ENCODE measurements at regions of chr9 and their contacts with region 1.

Region 1: DNA sequence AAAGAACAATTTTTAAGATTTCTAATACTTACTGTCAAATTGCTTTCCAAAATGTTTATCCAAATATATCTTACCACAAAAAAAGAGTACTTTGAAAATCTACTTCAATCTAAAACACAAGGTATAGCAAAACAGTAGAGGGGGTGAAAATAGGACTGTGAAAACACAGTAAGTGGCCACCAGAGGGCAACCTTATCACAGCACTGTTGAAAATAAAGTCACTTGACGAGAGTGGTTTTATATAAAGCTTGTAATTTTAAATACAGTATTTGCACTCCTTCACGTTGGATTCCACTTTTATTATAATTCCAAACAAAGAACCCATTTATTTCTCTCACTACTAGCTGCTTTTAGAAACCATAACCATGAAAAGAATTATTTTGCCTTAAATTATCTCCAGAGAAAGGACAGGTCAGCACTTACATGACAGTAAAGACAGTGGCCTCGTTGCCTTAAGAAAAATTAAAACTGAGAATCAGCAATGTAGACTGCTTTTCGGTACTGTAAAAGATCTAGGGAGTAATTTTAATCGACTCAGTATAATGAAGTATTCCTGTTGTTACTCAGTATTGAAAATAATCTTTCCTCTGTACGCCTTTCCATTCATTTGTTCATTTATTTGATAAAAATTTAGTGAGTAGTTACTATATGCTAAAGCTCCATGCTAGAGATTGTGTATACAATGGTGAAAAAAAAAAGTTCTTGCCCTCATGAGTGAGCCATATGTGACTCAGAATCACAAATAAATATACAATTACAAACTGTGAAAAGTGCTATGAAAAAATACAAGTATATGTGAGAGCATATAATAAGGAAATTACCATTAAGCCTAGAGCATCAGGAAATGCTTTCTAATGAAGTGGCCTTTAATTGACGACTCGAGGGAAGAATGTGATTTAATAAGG is 40.0 kb upstream of the CDK5RAP2 start:
- DNase-seq: peak; percentile 71
- H3K4me3 Mint-ChIP-seq: no peak overlapping the region
- H3K27ac Mint-ChIP-seq: peak overlapping the region; percentile 7
- H3K4me1 Mint-ChIP-seq: peaks cover 25% of the 10 kb centered on the region
- H3K27me3 Mint-ChIP-seq: no peaks in the 10 kb centered on the region
- CTCF ChIP-seq: peak; percentile 72

Region 2: GRCh38 chr9:120441408-120442307 is 178.3 kb before region 1 on chr9:
- CTCF ChIA-PET with region 1: no interaction called
- POLR2A ChIA-PET with region 1: no interaction called
- intact Hi-C with region 1: no loop called
- DNase-seq: no peak
- H3K4me3 Mint-ChIP-seq: no peak overlapping the region
- H3K27ac Mint-ChIP-seq: no peak overlapping the region
- H3K4me1 Mint-ChIP-seq: peaks cover 4% of the 10 kb centered on the region
- H3K27me3 Mint-ChIP-seq: no peaks in the 10 kb centered on the region
- CTCF ChIP-seq: no peak

Region 3: GRCh38 chr9:120609636-120610035 is 10.4 kb before region 1 on chr9:
- CTCF ChIA-PET with region 1: interaction called, 10 read pairs
- POLR2A ChIA-PET with region 1: interaction called, 4 read pairs
- intact Hi-C with region 1: no loop called
- DNase-seq: no peak
- H3K4me3 Mint-ChIP-seq: no peak overlapping the region
- H3K27ac Mint-ChIP-seq: no peak overlapping the region
- H3K4me1 Mint-ChIP-seq: peaks cover 20% of the 10 kb centered on the region
- H3K27me3 Mint-ChIP-seq: no peaks in the 10 kb centered on the region
- CTCF ChIP-seq: no peak

Region 4: DNA sequence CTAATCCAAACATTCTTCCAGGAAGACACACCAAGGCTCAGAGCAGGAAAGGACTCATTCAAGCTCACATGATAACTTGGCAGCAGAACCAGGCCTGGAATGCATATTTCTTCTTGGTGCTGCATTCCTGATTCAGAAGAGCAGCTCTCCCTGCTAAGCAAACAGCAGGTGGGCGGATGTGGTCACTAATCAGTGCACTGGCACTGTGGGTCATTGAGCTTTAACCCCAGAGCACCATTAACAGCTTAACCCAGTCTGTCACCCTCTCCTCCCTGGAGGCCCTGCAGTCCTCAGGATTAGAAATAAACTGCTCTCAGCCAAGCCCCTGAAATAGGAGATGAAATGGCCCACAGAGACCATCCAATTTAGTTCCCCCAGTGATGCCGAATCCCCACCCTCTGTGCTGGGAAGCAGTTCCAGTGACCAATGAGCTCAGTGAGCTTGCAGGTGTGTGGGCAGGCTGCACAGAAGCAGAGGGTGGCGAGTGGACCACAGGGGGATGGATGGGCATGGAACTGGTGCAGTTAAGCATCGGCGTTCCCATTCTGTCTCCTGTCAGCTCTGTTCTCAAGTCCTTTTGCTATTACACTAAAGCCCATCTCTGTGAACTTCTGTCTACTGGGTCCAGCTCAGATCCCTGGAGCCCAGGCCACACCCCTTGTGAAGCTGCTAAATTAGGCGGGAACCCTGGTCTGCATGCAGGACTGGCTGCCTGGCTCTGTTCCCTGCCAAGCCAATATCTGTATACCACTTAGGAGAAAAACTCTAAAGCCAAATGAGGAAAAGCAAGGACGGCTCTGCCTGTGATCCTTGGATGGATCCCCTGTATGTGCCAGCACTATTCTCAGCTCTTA is 110.9 kb after region 1 on chr9:
- CTCF ChIA-PET with region 1: interaction called, 20 read pairs
- POLR2A ChIA-PET with region 1: interaction called, 3 read pairs
- intact Hi-C with region 1: no loop called
- DNase-seq: peak; percentile 84
- H3K4me3 Mint-ChIP-seq: no peak overlapping the region
- H3K27ac Mint-ChIP-seq: peak overlapping the region; percentile 27
- H3K4me1 Mint-ChIP-seq: peaks cover 22% of the 10 kb centered on the region
- H3K27me3 Mint-ChIP-seq: no peaks in the 10 kb centered on the region
- CTCF ChIP-seq: no peak

Region 5: DNA sequence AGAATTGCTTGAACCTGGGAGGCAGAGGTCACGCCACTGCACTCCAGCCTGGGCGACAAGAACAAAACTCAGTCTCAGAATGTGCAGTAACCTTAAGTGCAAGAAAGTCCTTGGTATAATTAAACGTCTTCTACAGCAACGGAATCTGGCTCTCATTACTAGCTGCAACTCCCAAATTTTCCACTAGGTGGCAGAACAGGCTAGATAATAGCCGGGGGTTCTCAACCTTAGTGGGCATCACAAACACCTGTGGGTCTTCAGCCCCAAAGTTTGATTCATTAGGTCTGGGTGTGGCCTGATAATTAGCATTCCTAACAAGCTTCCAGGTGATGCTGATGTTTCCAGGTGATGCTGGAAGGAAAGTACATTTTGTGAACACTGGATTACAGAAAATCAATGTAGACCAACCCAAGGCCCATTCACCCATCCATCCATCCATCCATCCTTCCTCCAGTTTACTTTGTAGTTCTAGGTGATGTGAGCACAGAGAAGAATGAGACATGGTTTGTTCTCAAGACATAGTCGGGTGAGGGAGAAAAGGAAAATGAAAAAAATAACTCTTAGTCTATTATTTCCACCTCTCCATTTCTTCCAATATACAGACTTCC is 135.9 kb after region 1 on chr9:
- CTCF ChIA-PET with region 1: interaction called, 7 read pairs
- POLR2A ChIA-PET with region 1: no interaction called
- intact Hi-C with region 1: loop called (anchors 2 kb)
- DNase-seq: peak; percentile 71
- H3K4me3 Mint-ChIP-seq: no peak overlapping the region
- H3K27ac Mint-ChIP-seq: no peak overlapping the region
- H3K4me1 Mint-ChIP-seq: peaks cover 5% of the 10 kb centered on the region
- H3K27me3 Mint-ChIP-seq: no peaks in the 10 kb centered on the region
- CTCF ChIP-seq: peak; percentile 79

Region 6: DNA sequence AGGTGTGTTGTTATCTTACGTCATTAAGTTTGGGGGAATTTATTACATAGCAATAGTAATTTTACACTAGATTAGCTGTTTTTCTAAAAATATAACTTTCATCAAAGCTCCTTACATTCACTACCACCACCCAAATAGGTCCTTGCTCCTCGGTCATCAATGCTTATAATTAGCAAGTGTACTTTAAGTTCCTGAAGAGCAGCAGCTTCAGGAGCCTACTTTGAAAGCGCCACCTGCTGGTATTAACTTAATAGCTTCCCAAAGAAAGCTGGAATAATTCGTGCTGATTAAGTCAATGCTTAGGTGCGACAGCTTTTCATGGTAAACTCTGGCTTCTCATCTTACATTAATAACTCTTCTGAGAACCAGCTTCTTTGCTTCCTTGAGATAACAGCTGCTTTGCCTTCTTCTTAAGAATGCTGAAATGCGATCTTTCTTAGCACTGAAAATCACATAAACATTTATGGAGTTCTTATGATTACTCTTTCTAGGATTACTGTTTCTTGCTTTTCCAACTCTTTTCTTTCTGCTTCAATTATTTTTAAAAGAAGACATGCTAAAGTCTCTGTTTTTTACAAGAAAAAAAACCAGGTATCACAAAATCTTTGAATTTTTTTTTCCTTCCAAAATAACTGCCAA is 440.1 kb after region 1 on chr9:
- CTCF ChIA-PET with region 1: interaction called, 5 read pairs
- POLR2A ChIA-PET with region 1: no interaction called
- intact Hi-C with region 1: loop called (anchors 5 kb)
- DNase-seq: peak; percentile 66
- H3K4me3 Mint-ChIP-seq: no peak overlapping the region
- H3K27ac Mint-ChIP-seq: no peak overlapping the region
- H3K4me1 Mint-ChIP-seq: no peaks in the 10 kb centered on the region
- H3K27me3 Mint-ChIP-seq: no peaks in the 10 kb centered on the region
- CTCF ChIP-seq: peak; percentile 53

Measured in MCF 10A (cell line).